ENCODE measurements at regions of chr11 and their contacts with region 1.

Region 1: GRCh38 chr11:69683764-69684333 is 8.7 kb upstream of the LTO1 start:
- DNase-seq: no peak
- ATAC-seq: no peak
- H3K4me3 ChIP-seq: no peak overlapping the region
- H3K4me3 Mint-ChIP-seq: no peak overlapping the region
- H3K27ac ChIP-seq: no peak overlapping the region
- H3K27ac Mint-ChIP-seq: no peak overlapping the region
- H3K4me1 ChIP-seq: no peaks in the 10 kb centered on the region
- H3K4me1 Mint-ChIP-seq: peaks cover 0 to 9% (median 5%) of the 10 kb centered on the region in 7 donors
- H3K27me3 ChIP-seq: no peaks in the 10 kb centered on the region
- H3K27me3 Mint-ChIP-seq: peaks cover 6 to 14% (median 7%) of the 10 kb centered on the region in 5 donors

Region 2: GRCh38 chr11:69576069-69576782 is 107.6 kb before region 1 on chr11:
- CTCF ChIA-PET with region 1: no interaction called
- POLR2A ChIA-PET with region 1: no interaction called
- intact Hi-C with region 1: no loop called
- DNase-seq: no peak
- ATAC-seq: no peak
- H3K4me3 ChIP-seq: no peak overlapping the region
- H3K4me3 Mint-ChIP-seq: no peak overlapping the region
- H3K27ac ChIP-seq: no peak overlapping the region
- H3K27ac Mint-ChIP-seq: no peak overlapping the region
- H3K4me1 ChIP-seq: no peaks in the 10 kb centered on the region
- H3K4me1 Mint-ChIP-seq: peaks cover 0 to 5% (median 0%) of the 10 kb centered on the region in 7 donors
- H3K27me3 ChIP-seq: peaks cover 0 to 2% of the 10 kb centered on the region in 2 donors
- H3K27me3 Mint-ChIP-seq: peaks cover 23 to 38% (median 26%) of the 10 kb centered on the region in 5 donors

Region 3: GRCh38 chr11:69888483-69889076 is 204.7 kb after region 1 on chr11:
- CTCF ChIA-PET with region 1: interaction called, 8 read pairs
- POLR2A ChIA-PET with region 1: no interaction called
- intact Hi-C with region 1: loop called in 1 of 2 experiments (anchors 1 kb)
- DNase-seq: peak in 8 of 9 donors; percentile 29 to 66 (median 48)
- ATAC-seq: peak; percentile 45
- H3K4me3 ChIP-seq: no peak overlapping the region
- H3K4me3 Mint-ChIP-seq: no peak overlapping the region
- H3K27ac ChIP-seq: no peak overlapping the region
- H3K27ac Mint-ChIP-seq: no peak overlapping the region
- H3K4me1 ChIP-seq: no peaks in the 10 kb centered on the region
- H3K4me1 Mint-ChIP-seq: peaks cover 0 to 5% (median 0%) of the 10 kb centered on the region in 7 donors
- H3K27me3 ChIP-seq: no peaks in the 10 kb centered on the region
- H3K27me3 Mint-ChIP-seq: peaks cover 17 to 47% (median 25%) of the 10 kb centered on the region in 5 donors

Region 4: DNA sequence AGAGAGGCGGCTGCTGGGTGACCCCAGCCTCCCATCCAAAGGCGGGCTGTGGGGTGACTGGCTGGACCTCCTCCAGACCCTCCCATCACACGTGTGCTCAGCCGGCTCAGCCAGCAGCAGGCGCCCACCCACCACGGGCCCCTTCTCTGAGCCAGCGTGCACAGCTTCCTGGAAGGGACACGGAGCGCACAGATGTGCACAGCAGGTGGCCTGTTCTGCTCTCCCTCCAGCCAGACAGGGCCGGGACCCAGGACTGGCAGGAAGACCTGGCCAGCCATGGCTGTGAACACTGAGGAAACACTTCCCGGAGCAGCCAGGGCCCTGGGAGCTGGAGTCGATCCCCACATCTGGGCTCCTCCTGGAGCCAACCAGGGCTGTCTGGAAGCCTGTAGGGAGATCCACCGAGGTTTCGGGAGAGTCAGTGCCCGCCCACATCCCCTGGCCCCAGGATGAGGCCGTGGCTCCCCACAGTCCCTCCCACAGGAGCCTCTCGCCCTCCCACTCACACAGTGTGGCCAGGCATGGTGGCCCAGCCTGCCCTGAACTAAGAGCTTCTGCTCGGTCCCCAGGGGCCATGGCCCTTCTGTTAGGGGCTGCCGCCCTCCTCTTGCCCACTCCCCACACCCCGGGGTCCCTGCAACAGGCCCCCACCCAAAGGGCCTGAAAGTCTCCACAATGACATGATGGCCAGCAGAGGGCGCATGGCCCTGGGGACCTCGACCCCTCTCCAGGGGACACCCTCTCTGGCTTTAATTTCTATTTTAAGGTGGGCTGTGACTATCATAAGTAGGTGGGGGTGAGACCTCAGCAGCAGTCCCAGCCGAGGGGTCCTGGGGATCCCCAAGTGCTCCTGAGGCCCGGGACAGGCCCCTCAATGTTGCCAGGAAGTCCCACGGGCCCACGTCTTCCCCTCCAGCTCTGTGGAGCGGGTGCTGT is 226.0 kb after region 1 on chr11:
- CTCF ChIA-PET with region 1: no interaction called
- POLR2A ChIA-PET with region 1: no interaction called
- intact Hi-C with region 1: loop called in 1 of 2 experiments (anchors 1 kb)
- DNase-seq: no peak
- ATAC-seq: no peak
- H3K4me3 ChIP-seq: no peak overlapping the region
- H3K4me3 Mint-ChIP-seq: no peak overlapping the region
- H3K27ac ChIP-seq: no peak overlapping the region
- H3K27ac Mint-ChIP-seq: no peak overlapping the region
- H3K4me1 ChIP-seq: no peaks in the 10 kb centered on the region
- H3K4me1 Mint-ChIP-seq: no peaks in the 10 kb centered on the region
- H3K27me3 ChIP-seq: peaks cover 0 to 4% of the 10 kb centered on the region in 2 donors
- H3K27me3 Mint-ChIP-seq: peaks cover 0 to 66% (median 21%) of the 10 kb centered on the region in 5 donors

Region 5: DNA sequence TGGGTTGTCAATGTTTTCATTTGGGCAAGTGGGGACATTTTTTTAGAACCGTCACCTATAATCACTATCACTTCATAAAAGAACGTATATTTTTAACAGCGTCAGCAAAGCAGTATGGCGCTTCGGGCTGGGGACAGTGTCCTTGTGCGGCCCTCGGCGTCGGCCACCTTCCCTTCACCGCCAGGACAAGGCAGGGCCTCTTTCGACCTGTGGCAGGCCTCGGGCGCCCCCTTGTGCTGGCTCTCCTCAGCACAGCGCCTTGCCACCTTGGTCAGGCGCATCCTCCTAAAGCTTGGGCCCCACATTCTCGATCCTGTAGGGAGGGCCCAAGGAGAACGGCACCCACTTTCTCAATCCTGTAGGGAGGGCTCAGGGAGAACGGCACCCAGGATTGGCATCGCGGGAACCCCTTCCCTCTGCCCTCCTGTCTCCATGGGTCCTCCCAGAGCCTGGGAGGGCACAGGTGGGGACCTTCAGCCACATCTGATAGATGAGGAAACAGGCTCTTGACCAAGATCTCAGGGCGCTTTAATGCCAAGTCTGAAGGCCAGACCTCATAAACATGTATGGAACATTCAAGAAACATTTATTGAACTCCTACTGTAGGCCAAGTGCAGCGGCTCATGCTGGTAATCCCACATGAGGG is 507.8 kb after region 1 on chr11:
- CTCF ChIA-PET with region 1: no interaction called
- POLR2A ChIA-PET with region 1: no interaction called
- intact Hi-C with region 1: loop called (anchors 1 to 5 kb)
- DNase-seq: peak in 6 of 9 donors; percentile 11 to 68 (median 29)
- ATAC-seq: peak; percentile 62
- H3K4me3 ChIP-seq: no peak overlapping the region
- H3K4me3 Mint-ChIP-seq: no peak overlapping the region
- H3K27ac ChIP-seq: no peak overlapping the region
- H3K27ac Mint-ChIP-seq: no peak overlapping the region
- H3K4me1 ChIP-seq: no peaks in the 10 kb centered on the region
- H3K4me1 Mint-ChIP-seq: peaks cover 0 to 6% (median 0%) of the 10 kb centered on the region in 7 donors
- H3K27me3 ChIP-seq: no peaks in the 10 kb centered on the region
- H3K27me3 Mint-ChIP-seq: peaks cover 0 to 12% (median 8%) of the 10 kb centered on the region in 5 donors

Region 6: DNA sequence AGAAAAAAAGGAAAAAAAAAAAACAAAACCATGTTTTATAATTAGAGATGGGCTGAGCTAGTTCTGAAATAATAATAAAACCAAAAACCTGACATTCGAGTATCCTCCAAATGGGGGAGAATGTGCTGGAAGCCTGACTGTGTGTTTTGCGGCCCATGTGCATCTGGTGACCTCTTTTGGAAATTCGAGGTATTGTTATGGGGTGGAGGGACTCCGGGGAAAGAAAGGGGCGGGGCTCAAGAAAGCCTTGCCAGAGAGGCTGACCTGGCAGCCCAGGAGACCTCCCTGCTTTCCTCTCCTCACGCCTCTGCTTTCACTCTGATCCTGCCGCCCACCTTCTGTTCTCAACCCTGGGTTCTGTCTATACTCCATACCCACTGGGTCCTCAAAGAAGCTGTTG is 787.4 kb after region 1 on chr11:
- CTCF ChIA-PET with region 1: no interaction called
- POLR2A ChIA-PET with region 1: no interaction called
- intact Hi-C with region 1: loop called in 1 of 2 experiments (anchors 10 kb)
- DNase-seq: peak in 2 of 9 donors; percentile 4
- ATAC-seq: no peak
- H3K4me3 ChIP-seq: no peak overlapping the region
- H3K4me3 Mint-ChIP-seq: no peak overlapping the region
- H3K27ac ChIP-seq: no peak overlapping the region
- H3K27ac Mint-ChIP-seq: peak overlapping the region in 1 of 9 donors; percentile 72
- H3K4me1 ChIP-seq: no peaks in the 10 kb centered on the region
- H3K4me1 Mint-ChIP-seq: peaks cover 0 to 6% (median 0%) of the 10 kb centered on the region in 7 donors
- H3K27me3 ChIP-seq: no peaks in the 10 kb centered on the region
- H3K27me3 Mint-ChIP-seq: peaks cover 0 to 8% (median 0%) of the 10 kb centered on the region in 5 donors

Region 7: DNA sequence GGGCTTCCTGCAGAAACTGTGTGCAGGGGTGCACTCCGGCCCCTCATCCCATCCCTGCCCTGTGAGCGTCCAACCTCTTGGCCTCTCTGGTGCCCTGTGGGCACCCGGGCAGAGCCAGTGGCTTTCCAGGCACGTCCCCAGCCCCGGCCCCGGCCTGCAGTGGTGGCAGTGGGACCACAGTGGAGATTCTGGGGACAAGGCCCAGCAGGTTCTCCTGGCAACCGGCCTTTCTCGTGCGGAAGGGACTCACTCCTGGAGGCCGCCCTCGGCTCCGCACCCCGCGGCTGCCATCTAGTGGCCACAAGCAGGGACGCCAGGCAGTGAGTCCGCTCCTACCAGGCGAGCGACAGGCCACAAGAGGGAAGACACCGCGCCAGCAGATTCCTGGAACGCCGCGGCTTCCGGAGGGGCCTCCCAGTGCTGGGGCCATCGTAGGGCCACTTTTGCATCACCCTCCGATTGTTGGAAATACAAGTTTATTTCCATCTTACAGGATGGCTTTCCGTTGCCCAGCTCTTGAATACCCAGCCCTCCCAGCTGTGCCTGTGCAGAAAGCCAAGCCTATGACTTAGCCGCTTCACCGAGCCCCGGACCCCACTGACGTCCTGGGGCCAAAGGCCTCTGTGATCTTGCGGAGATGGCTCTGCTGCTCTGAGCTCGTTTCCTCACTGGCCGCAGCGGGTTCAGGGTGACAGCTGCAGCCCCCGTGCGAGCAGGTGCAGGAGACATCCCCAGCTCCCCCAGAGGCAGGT is 1071.7 kb after region 1 on chr11:
- CTCF ChIA-PET with region 1: no interaction called
- POLR2A ChIA-PET with region 1: no interaction called
- intact Hi-C with region 1: loop called in 1 of 2 experiments (anchors 5 kb)
- DNase-seq: peak in 7 of 9 donors; percentile 13 to 71 (median 32)
- ATAC-seq: peak; percentile 82
- H3K4me3 ChIP-seq: no peak overlapping the region
- H3K4me3 Mint-ChIP-seq: no peak overlapping the region
- H3K27ac ChIP-seq: no peak overlapping the region
- H3K27ac Mint-ChIP-seq: no peak overlapping the region
- H3K4me1 ChIP-seq: no peaks in the 10 kb centered on the region
- H3K4me1 Mint-ChIP-seq: no peaks in the 10 kb centered on the region
- H3K27me3 ChIP-seq: no peaks in the 10 kb centered on the region
- H3K27me3 Mint-ChIP-seq: peaks cover 0 to 30% (median 10%) of the 10 kb centered on the region in 5 donors

Measured in naive thymus-derived CD4-positive, alpha-beta T cell (primary cell).